ENCODE measurements at regions of chr2 and their contacts with region 1.

Region 1: DNA sequence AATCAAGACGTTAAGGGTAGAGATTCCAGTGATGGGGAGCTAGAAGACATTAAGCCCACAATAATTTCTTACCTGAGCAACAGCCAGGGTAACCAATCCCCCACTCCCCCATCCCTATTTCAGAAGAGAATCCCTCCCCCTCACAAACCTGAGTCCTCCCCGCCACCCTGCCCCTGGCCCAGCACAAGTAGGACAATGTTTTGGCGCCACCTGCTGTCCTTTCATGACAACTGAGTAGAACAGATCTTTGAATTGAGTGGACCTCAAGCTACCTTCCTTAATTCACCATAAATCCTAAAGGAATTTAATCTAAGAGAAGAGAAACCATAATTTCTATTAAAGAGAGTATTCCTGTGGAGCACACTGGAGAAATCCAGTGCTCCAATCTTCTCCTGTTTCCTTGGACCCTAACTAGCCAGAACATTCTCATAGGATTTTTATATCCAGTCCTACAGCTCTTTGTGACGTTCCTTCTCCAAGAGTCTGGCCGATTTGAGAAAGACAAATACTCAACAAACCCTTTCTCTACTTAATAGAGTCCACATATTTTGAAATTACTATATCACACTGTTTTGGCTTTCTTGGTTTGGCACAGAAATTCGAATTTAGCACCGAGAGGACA is 41.1 kb downstream of the NHEJ1 start:
- DNase-seq: peak; percentile 81
- ATAC-seq: peak; percentile 78
- H3K4me3 Mint-ChIP-seq: no peak overlapping the region
- H3K27ac Mint-ChIP-seq: no peak overlapping the region
- H3K4me1 Mint-ChIP-seq: peaks cover 21% of the 10 kb centered on the region
- H3K27me3 Mint-ChIP-seq: no peaks in the 10 kb centered on the region
- CTCF ChIP-seq: peak; percentile 59

Region 2: GRCh38 chr2:218995972-218996711 is 123.4 kb before region 1 on chr2:
- CTCF ChIA-PET with region 1: interaction called, 10 read pairs
- POLR2A ChIA-PET with region 1: no interaction called
- DNase-seq: peak; percentile 93
- ATAC-seq: peak; percentile 49
- H3K4me3 Mint-ChIP-seq: peak overlapping the region; percentile 60
- H3K27ac Mint-ChIP-seq: no peak overlapping the region
- H3K4me1 Mint-ChIP-seq: peaks cover 26% of the 10 kb centered on the region
- H3K27me3 Mint-ChIP-seq: peaks cover 100% of the 10 kb centered on the region
- CTCF ChIP-seq: peak; percentile 90

Region 3: GRCh38 chr2:219041252-219041651 is 78.3 kb before region 1 on chr2 and contains the start of gene CFAP65:
- CTCF ChIA-PET with region 1: interaction called, 12 read pairs
- POLR2A ChIA-PET with region 1: no interaction called
- DNase-seq: peak; percentile 69
- ATAC-seq: peak; percentile 91
- H3K4me3 Mint-ChIP-seq: peak within 1 kb of the TSS; percentile 86
- H3K27ac Mint-ChIP-seq: 0 out of 2 replicates have a peak within 1 kb of the TSS, but pooled peaks have one; percentile 8
- H3K4me1 Mint-ChIP-seq: peaks cover 4% of the 10 kb centered on the region; the same call in 1 of the 2 replicates
- H3K27me3 Mint-ChIP-seq: peaks cover 30% of the 10 kb centered on the region
- CTCF ChIP-seq: no peak
- total RNA-seq, gene CFAP65: 0.44 to 1.0 TPM (median 0.48 TPM) in 3 replicates

Region 4: DNA sequence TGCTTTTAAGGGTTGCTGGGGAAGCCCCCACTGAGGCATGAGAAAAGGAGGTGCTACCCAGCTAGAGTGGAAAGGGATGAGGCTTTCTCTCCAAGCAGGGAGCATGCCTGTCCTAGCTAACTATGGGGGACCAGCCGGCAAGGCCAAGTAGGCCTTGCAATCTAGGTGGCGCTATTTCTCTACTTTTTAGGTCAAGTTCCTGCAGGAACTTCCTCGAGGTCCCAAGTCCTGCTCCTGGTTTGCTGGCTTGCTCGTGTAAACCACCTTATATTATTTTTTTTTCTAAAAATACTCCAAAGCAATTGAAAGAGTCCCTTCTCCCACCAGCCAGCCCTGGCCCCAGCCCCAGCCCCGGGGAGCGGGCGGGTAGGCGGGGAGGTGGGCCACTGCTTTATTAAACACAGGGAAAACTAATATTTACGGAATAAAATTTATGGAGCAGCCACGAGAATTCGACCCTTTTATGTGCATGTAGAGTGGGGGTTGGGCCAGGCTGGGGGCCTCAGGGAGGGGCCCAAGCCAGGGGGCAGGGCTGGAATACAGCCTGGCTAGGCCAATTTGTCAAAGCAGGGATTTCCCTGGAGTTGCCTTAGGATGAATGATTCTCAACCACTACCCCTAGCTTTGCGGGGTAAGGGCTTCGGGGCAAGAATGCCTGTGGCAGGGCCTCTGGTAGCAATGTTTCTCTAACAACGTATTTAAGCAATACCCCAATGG is 46.0 kb before region 1 on chr2:
- CTCF ChIA-PET with region 1: interaction called, 80 read pairs
- POLR2A ChIA-PET with region 1: no interaction called
- DNase-seq: peak; percentile 66
- ATAC-seq: peak; percentile 88
- H3K4me3 Mint-ChIP-seq: no peak overlapping the region
- H3K27ac Mint-ChIP-seq: no peak overlapping the region
- H3K4me1 Mint-ChIP-seq: peaks cover 6% of the 10 kb centered on the region
- H3K27me3 Mint-ChIP-seq: no peaks in the 10 kb centered on the region
- CTCF ChIP-seq: peak; percentile 70

Region 5: DNA sequence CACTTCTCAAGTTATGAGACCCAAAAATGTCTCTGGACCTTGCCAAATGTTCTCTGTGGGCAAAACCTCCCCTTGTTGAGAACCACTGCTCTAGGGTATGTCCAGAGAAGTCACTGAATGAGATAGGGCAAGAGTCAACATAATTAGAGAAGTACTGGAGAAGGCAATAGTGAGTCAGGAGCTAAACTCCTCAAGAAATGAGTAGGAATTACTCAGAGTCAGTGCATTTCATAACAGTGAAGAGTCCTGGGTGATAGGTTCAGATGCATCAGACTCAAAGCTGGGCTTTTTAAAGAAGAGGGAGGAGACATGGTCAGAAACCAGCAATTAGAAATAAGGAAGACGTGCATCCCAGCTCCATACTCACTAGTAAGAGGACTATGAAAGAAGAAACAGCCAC is 20.2 kb before region 1 on chr2:
- CTCF ChIA-PET with region 1: interaction called, 62 read pairs
- POLR2A ChIA-PET with region 1: no interaction called
- DNase-seq: no peak
- ATAC-seq: no peak
- H3K4me3 Mint-ChIP-seq: no peak overlapping the region
- H3K27ac Mint-ChIP-seq: no peak overlapping the region
- H3K4me1 Mint-ChIP-seq: peaks cover 4% of the 10 kb centered on the region; the same call in 1 of the 2 replicates
- H3K27me3 Mint-ChIP-seq: no peaks in the 10 kb centered on the region
- CTCF ChIP-seq: no peak

Region 6: DNA sequence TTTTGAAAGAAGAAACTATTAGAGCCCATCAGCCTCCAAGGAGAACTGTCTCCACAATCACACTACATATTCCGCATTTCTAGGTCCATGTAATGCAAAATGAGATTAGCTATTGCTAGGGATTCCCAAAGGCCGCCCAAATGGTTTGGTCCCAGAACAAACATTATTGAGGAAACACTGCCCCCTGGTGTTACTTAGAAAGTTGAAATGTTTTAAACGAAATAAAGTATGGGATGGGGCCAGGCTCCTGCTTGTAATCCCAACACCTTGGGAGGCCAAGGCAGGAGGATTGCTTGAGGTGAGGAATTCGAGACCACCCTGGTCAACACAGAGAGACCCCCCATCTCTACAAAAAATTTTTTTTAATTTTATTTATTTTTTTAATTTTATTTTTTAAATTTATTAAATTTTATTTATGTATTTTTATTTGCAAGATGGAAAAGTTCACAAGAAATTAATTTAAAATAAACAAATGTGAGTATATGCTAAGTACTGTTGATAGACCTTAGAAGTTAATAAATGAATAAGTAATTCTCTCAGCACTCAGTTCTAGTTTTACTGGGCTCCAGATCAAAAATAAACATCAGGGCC is 35.6 kb after region 1 on chr2:
- CTCF ChIA-PET with region 1: interaction called, 27 read pairs
- POLR2A ChIA-PET with region 1: no interaction called
- DNase-seq: peak; percentile 24
- ATAC-seq: peak; percentile 40
- H3K4me3 Mint-ChIP-seq: no peak overlapping the region
- H3K27ac Mint-ChIP-seq: no peak overlapping the region
- H3K4me1 Mint-ChIP-seq: peaks cover 10% of the 10 kb centered on the region
- H3K27me3 Mint-ChIP-seq: no peaks in the 10 kb centered on the region
- CTCF ChIP-seq: peak; percentile 53

Measured in WTC11 (cell line).